ENCODE measurements at regions of chr3 and their contacts with region 1.

Region 1: GRCh38 chr3:52655895-52656294 is 29.8 kb downstream of the PBRM1 start:
- DNase-seq: no peak
- H3K4me3 Mint-ChIP-seq: no peak overlapping the region
- H3K27ac Mint-ChIP-seq: peak overlapping the region; percentile 47
- H3K4me1 Mint-ChIP-seq: peaks cover 5% of the 10 kb centered on the region
- H3K27me3 Mint-ChIP-seq: no peaks in the 10 kb centered on the region

Region 2: DNA sequence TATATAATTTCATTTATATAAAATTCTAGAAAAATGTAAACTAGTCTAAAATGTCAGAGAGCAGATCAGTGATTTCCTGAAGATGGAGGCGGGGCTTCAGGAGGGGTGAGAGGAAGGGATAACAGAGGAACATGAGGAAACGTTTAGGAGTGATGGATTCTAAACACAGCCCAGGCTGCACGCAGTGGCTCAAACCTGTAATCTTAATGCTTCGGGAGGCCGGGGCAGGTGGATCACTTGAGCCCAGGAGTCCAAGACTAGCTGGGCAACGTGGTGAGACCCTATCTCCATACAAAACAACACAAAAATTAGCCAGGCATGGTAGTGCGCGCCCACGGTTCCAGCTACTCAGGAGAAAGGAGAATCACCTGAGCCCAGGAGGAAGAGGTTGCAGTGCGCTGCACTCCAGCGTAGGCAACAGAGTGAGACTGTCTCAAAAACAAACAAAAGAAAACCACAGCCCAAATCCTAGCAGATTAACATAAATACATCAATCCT is 734.8 kb before region 1 on chr3:
- intact Hi-C with region 1: no loop called
- DNase-seq: no peak
- H3K4me3 Mint-ChIP-seq: no peak overlapping the region
- H3K27ac Mint-ChIP-seq: no peak overlapping the region
- H3K4me1 Mint-ChIP-seq: no peaks in the 10 kb centered on the region
- H3K27me3 Mint-ChIP-seq: peaks cover 15% of the 10 kb centered on the region

Region 3: GRCh38 chr3:52670621-52671521 is 15.0 kb after region 1 on chr3:
- intact Hi-C with region 1: loop called (anchors 2 kb)
- DNase-seq: peak; percentile 81
- H3K4me3 Mint-ChIP-seq: peak overlapping the region; percentile 59
- H3K27ac Mint-ChIP-seq: peak overlapping the region; percentile 99
- H3K4me1 Mint-ChIP-seq: peaks cover 26% of the 10 kb centered on the region
- H3K27me3 Mint-ChIP-seq: no peaks in the 10 kb centered on the region

Measured in activated CD4-positive, alpha-beta T cell treated with anti-CD3 and anti-CD28 coated beads, Interleukin-2, amount 10 ng/mL, durations not matched to agents 24 days and 14 days (primary cell).